ENCODE measurements at regions of chr10 and their contacts with region 1.

Region 1: DNA sequence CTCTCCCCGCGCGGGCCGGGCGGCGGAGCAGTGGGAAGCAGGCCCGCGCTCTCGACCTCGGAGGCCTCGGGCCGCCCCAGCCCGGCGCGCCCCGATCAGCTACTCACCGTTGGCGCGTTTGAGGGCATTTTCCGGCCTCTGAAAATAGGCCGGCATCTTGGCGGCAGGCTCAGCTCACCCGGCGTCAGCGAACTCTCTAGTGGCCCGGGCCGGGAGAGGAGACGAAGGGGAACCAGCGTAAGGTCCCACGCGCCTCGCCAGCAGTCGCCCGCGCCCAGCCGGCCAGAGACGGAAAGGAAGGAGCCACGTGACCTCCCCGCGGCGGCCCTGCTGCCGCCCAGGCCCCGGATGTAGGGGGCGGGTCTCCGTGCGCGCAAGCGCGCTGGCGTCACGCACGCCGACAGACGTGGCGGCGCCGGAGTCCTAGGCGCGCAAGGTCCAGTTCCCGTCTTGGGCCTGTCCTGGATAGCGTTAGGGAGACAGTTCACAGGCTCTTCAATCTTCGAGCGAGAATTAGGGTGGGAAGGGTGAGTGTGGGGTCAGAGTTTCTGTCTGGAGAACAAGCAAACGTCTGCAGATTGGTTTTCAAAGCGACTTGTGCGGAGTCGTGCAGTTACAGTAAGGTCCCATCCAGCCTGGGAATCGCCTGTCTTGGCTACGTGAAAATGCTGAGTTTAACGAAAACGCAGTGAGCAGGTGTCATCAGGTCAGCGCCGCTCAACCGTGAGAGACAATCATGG is at the start of gene EIF3A:
- DNase-seq: peak; percentile 88 to 94 (median 91)
- H3K4me3 ChIP-seq: peak within 1 kb of the TSS; percentile 93 to 99
- H3K4me3 Mint-ChIP-seq: peak within 1 kb of the TSS; percentile 97 to 99 (median 99)
- H3K27ac ChIP-seq: peak within 1 kb of the TSS; percentile 98
- H3K27ac Mint-ChIP-seq: peak within 1 kb of the TSS; percentile 97 to 99 (median 99)
- H3K4me1 ChIP-seq: peaks cover 44% of the 10 kb centered on the region
- H3K4me1 Mint-ChIP-seq: peaks cover 28 to 61% (median 39%) of the 10 kb centered on the region in 4 donors
- H3K27me3 ChIP-seq: no peaks in the 10 kb centered on the region
- H3K27me3 Mint-ChIP-seq: no peaks in the 10 kb centered on the region
- total RNA-seq, gene EIF3A: 122 to 129 TPM

Region 2: DNA sequence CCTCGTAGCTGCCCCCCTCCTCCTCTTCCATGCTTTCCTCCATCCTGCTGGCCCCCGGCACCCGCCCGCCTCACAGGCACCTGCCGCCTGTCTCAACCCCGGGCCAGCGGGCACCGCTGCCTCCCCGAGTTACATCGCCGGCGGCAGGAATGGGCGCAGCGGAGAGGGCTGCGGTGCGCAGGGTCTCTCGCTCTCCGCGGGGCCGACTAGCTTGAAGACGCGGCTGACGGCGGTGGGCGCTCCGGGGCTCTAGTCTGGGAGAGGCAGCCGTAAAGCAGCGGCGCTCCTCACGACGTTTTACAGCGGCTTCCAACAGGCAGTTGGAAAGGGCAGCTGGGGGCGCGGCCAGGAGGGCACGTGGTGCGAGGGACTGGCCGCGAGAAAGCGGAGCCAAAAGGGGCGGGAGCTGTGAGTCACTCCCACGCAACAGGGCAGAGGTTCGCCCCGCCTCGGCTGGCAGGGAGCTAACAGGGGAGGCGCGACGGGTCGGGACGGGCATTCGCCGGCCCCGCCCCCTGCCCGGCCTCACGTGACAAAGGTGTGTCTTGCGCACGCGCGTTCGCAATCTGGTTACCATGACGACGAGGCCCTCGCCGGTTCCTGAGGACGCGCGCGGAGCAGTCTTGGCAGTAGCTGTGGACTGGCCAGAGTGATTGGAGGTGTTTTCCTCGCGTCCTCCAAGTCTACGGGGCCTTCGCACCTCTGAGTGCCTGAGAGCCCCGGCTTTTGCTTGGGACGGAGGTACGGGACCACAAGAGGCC is 325.8 kb before region 1 on chr10 and contains the start of gene CACUL1:
- CTCF ChIA-PET with region 1: no interaction called
- POLR2A ChIA-PET with region 1: no interaction called
- intact Hi-C with region 1: loop called (anchors 2 kb)
- DNase-seq: peak; percentile 100
- H3K4me3 ChIP-seq: peak within 1 kb of the TSS; percentile 64 to 74
- H3K4me3 Mint-ChIP-seq: peak within 1 kb of the TSS; percentile 92 to 96 (median 94)
- H3K27ac ChIP-seq: peak within 1 kb of the TSS; percentile 87
- H3K27ac Mint-ChIP-seq: peak within 1 kb of the TSS; percentile 90 to 97 (median 96)
- H3K4me1 ChIP-seq: peaks cover 43% of the 10 kb centered on the region
- H3K4me1 Mint-ChIP-seq: peaks cover 22 to 49% (median 34%) of the 10 kb centered on the region in 4 donors
- H3K27me3 ChIP-seq: no peaks in the 10 kb centered on the region
- H3K27me3 Mint-ChIP-seq: peaks cover 0 to 9% of the 10 kb centered on the region in 2 donors
- total RNA-seq, gene CACUL1: 32.1 to 32.3 TPM

Region 3: GRCh38 chr10:119090968-119091367 is 10.3 kb after region 1 on chr10:
- CTCF ChIA-PET with region 1: interaction called, 24 read pairs
- POLR2A ChIA-PET with region 1: interaction called, 124 read pairs
- intact Hi-C with region 1: loop called (anchors 1 kb)
- DNase-seq: peak; percentile 81 to 88 (median 84)
- H3K4me3 ChIP-seq: peak overlapping the region in 1 of 2 donors; percentile 36
- H3K4me3 Mint-ChIP-seq: peak overlapping the region; percentile 72 to 89 (median 82)
- H3K27ac ChIP-seq: peak overlapping the region; percentile 72
- H3K27ac Mint-ChIP-seq: peak overlapping the region; percentile 91 to 100 (median 100)
- H3K4me1 ChIP-seq: peaks cover 67% of the 10 kb centered on the region
- H3K4me1 Mint-ChIP-seq: peaks cover 39 to 73% (median 55%) of the 10 kb centered on the region in 4 donors
- H3K27me3 ChIP-seq: no peaks in the 10 kb centered on the region
- H3K27me3 Mint-ChIP-seq: no peaks in the 10 kb centered on the region

Region 4: DNA sequence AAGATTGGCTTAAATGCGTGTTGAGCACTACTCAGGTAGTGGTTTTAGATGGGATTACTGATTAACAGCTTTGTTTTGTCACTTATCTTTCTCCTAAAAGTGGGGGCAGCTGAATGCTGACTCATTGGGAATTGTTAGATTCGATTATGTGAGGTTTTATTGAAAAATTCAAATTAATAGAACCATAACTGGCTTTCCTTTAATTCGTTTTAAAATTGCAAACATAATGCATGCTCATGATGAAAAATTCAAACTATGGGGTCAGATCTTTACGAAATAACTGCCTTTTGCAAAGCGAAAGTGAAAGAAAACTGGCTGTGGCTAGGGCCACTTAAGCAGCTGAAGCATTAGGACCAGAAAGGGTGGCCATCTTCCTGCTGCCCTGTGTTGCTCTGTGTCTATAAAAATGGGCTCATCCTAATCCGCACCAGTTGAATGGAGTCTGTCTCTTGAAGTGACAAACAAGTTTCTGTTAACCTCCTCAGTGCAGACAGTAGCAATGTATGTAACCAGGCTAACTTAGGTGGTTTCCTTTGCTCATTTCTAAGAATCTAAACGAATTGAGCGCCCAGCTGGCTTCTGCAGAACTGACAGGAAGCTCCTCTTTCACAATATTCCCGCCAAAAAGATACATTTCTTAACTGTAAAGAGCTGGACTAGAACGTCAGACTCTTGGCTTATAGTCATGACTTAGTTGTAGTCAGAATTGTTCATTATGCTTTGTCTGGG is 51.0 kb after region 1 on chr10:
- CTCF ChIA-PET with region 1: no interaction called
- POLR2A ChIA-PET with region 1: interaction called, 23 read pairs
- intact Hi-C with region 1: loop called (anchors 1 kb)
- DNase-seq: peak; percentile 42 to 57 (median 50)
- H3K4me3 ChIP-seq: peak overlapping the region; percentile 3 to 44
- H3K4me3 Mint-ChIP-seq: peak overlapping the region; percentile 87 to 96 (median 92)
- H3K27ac ChIP-seq: peak overlapping the region; percentile 65
- H3K27ac Mint-ChIP-seq: peak overlapping the region; percentile 86 to 99 (median 95)
- H3K4me1 ChIP-seq: peaks cover 40% of the 10 kb centered on the region
- H3K4me1 Mint-ChIP-seq: peaks cover 31 to 49% (median 38%) of the 10 kb centered on the region in 4 donors
- H3K27me3 ChIP-seq: no peaks in the 10 kb centered on the region
- H3K27me3 Mint-ChIP-seq: no peaks in the 10 kb centered on the region

Region 5: GRCh38 chr10:119178372-119179119 is 97.9 kb after region 1 on chr10 and contains the start of gene PRDX3:
- CTCF ChIA-PET with region 1: no interaction called
- POLR2A ChIA-PET with region 1: interaction called, 6 read pairs
- intact Hi-C with region 1: loop called (anchors 1 kb)
- DNase-seq: peak; percentile 89 to 92 (median 89)
- H3K4me3 ChIP-seq: peak within 1 kb of the TSS; percentile 96 to 100
- H3K4me3 Mint-ChIP-seq: peak within 1 kb of the TSS; percentile 89 to 99 (median 96)
- H3K27ac ChIP-seq: peak within 1 kb of the TSS; percentile 81
- H3K27ac Mint-ChIP-seq: peak within 1 kb of the TSS; percentile 85 to 98 (median 96)
- H3K4me1 ChIP-seq: peaks cover 44% of the 10 kb centered on the region
- H3K4me1 Mint-ChIP-seq: peaks cover 16 to 51% (median 34%) of the 10 kb centered on the region in 4 donors
- H3K27me3 ChIP-seq: no peaks in the 10 kb centered on the region
- H3K27me3 Mint-ChIP-seq: no peaks in the 10 kb centered on the region
- total RNA-seq, gene PRDX3: 34.3 to 38.2 TPM

Region 6: GRCh38 chr10:119596537-119597404 is 516.1 kb after region 1 on chr10 and contains the start of gene TIAL1:
- CTCF ChIA-PET with region 1: no interaction called
- POLR2A ChIA-PET with region 1: no interaction called
- intact Hi-C with region 1: loop called (anchors 10 kb)
- DNase-seq: peak; percentile 89 to 97 (median 91)
- H3K4me3 ChIP-seq: peak within 1 kb of the TSS; percentile 83 to 99
- H3K4me3 Mint-ChIP-seq: peak within 1 kb of the TSS; percentile 93 to 100 (median 99)
- H3K27ac ChIP-seq: peak within 1 kb of the TSS; percentile 98
- H3K27ac Mint-ChIP-seq: peak within 1 kb of the TSS; percentile 97 to 100 (median 99)
- H3K4me1 ChIP-seq: peaks cover 43% of the 10 kb centered on the region
- H3K4me1 Mint-ChIP-seq: peaks cover 37 to 57% (median 44%) of the 10 kb centered on the region in 4 donors
- H3K27me3 ChIP-seq: no peaks in the 10 kb centered on the region
- H3K27me3 Mint-ChIP-seq: no peaks in the 10 kb centered on the region
- total RNA-seq, gene TIAL1: 201 to 212 TPM